Head of caudate nucleus (tissue), 42 donors: ENCODE measurements at regions of chr18 and their contacts with region 1.

Region 1: DNA sequence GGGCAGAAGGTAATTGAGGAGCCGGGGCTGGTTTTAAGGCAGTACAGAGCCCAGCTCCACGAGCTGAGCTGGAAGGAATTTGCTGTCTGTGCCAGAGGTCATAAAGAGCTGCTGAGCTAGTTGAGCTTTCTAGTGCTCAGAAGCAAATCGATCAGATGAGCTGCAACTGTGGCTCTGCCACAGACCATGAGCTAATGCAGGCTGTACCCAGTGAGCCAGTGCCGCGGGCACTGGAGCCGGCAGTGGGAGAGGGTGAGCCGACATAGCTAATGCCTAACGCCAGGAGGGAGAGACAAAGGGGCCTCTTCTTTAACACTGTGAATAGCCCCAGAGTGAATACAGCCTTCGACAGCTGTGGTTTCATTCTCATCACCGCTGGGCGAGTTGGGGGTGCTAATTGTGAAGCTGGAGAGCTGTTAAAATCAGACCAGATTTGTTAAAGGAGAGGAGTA is 410.1 kb upstream of the TCF4 start:
- DNase-seq: peak; percentile 57 to 90 (median 77)

Region 2: GRCh38 chr18:55688030-55688429 is 310.1 kb before region 1 on chr18:
- intact Hi-C with region 1: no loop called
- DNase-seq: no peak

Region 3: GRCh38 chr18:56043671-56044070 is 45.6 kb after region 1 on chr18:
- intact Hi-C with region 1: loop called (anchors 5 kb)
- DNase-seq: peak; percentile 77 to 98 (median 91)